ENCODE measurements at regions of chr2 and their contacts with region 1.

Region 1: GRCh38 chr2:13545320-13545719 is 828.6 kb downstream of the TRIB2 start:
- DNase-seq: no peak
- ATAC-seq: no peak
- H3K4me3 ChIP-seq: no peak overlapping the region
- H3K27ac ChIP-seq: no peak overlapping the region
- H3K4me1 ChIP-seq: no peaks in the 10 kb centered on the region
- H3K27me3 ChIP-seq: no peaks in the 10 kb centered on the region
- CTCF ChIP-seq: no peak
- POLR2A ChIP-seq: no peak
- RAD21 ChIP-seq: no peak

Region 2: DNA sequence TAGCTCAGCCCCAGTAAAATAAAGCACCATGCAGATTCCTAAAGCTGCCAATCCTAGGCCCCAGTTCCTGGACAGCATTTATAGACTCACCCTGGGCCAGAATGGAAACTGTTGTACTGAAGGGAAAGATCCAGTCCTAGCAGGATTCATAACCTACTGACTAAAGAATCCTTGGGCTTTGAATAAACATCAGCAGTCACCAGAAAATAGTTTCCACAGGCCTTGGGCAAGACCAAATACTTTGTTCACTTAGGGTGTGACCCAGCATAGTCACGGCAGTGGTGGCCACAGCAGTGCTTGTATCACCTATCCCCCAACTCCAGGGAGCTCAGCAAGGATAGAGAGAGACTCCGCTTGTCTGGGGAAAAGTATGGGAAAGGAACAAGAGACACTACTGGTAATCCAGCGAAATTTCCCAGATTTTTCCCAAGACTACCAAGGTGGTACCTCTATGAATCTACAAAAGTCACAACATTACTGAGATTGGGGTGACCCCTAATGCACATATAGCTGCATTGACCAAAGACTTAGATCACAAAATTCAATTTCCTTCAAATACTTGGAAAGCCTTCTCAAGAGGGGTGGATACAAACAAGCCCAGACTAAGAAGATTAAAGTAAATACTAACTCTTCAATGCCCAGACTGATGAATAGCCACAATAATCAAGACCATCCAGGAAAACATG is 339.1 kb after region 1 on chr2:
- CTCF ChIA-PET with region 1: no interaction called
- POLR2A ChIA-PET with region 1: no interaction called
- dilution Hi-C with region 1: no loop called
- in situ Hi-C with region 1: no loop called
- intact Hi-C with region 1: loop called (anchors 5 kb)
- DNase-seq: no peak
- ATAC-seq: no peak
- H3K4me3 ChIP-seq: no peak overlapping the region
- H3K27ac ChIP-seq: no peak overlapping the region
- H3K4me1 ChIP-seq: no peaks in the 10 kb centered on the region
- H3K27me3 ChIP-seq: no peaks in the 10 kb centered on the region
- CTCF ChIP-seq: no peak
- POLR2A ChIP-seq: no peak
- RAD21 ChIP-seq: no peak

Measured in IMR-90 (cell line).